ENCODE measurements at regions of chr11 and their contacts with region 1.

Region 1: GRCh38 chr11:92711926-92712325 is 257.5 kb upstream of the MTNR1B start:
- DNase-seq: no peak
- ATAC-seq: no peak
- H3K4me3 ChIP-seq: no peak overlapping the region
- H3K27ac ChIP-seq: no peak overlapping the region
- H3K4me1 ChIP-seq: no peaks in the 10 kb centered on the region
- H3K27me3 ChIP-seq: no peaks in the 10 kb centered on the region
- CTCF ChIP-seq: no peak
- POLR2A ChIP-seq: no peak

Region 2: GRCh38 chr11:92523611-92524010 is 188.3 kb before region 1 on chr11:
- in situ Hi-C with region 1: no loop called
- intact Hi-C with region 1: no loop called
- DNase-seq: no peak
- ATAC-seq: no peak
- H3K4me3 ChIP-seq: no peak overlapping the region
- H3K27ac ChIP-seq: no peak overlapping the region
- H3K4me1 ChIP-seq: no peaks in the 10 kb centered on the region
- H3K27me3 ChIP-seq: no peaks in the 10 kb centered on the region
- CTCF ChIP-seq: no peak
- POLR2A ChIP-seq: no peak

Region 3: GRCh38 chr11:92775003-92775676 is 63.2 kb after region 1 on chr11:
- in situ Hi-C with region 1: loop called in 1 of 4 experiments (anchors 10 kb)
- intact Hi-C with region 1: no loop called
- DNase-seq: no peak
- ATAC-seq: no peak
- H3K4me3 ChIP-seq: no peak overlapping the region
- H3K27ac ChIP-seq: no peak overlapping the region
- H3K4me1 ChIP-seq: no peaks in the 10 kb centered on the region
- H3K27me3 ChIP-seq: no peaks in the 10 kb centered on the region
- CTCF ChIP-seq: no peak
- POLR2A ChIP-seq: no peak

Region 4: DNA sequence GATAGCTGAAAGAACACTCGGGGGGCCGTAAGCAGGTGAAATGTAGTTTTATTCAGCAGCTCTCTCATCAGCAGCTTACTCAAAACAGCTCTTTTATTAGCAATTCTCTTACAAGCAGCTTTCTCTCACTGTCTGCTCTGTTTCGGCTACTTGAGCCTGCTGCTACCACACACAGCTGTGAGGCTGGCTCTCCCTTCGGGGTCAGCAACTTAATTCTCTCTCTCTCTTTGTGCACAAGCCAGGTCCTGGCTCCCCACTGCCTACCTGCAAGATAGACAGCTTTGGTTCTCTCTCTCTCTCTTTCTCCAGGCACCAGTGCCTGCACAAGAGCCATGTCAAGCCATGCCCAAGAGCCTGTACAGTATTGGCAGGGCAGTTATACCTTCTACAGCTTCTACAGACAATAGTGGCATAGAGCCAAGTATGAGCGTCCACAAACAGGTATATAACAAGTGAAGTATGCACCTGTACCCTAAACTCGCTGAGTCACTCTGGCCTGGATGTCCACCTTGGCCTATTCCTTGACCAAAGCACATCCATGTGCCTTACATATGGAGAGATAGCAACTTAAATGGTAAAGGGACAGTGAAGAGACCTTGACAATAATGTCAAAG is 368.3 kb after region 1 on chr11:
- in situ Hi-C with region 1: no loop called
- intact Hi-C with region 1: no loop called
- DNase-seq: no peak
- ATAC-seq: no peak
- H3K4me3 ChIP-seq: no peak overlapping the region
- H3K27ac ChIP-seq: no peak overlapping the region
- H3K4me1 ChIP-seq: no peaks in the 10 kb centered on the region
- H3K27me3 ChIP-seq: no peaks in the 10 kb centered on the region
- CTCF ChIP-seq: no peak
- POLR2A ChIP-seq: no peak

Measured in gastrocnemius medialis (tissue), 4 donors.